Head of caudate nucleus (tissue), 42 donors: ENCODE measurements at regions of chrX and their contacts with region 1.

Region 1: DNA sequence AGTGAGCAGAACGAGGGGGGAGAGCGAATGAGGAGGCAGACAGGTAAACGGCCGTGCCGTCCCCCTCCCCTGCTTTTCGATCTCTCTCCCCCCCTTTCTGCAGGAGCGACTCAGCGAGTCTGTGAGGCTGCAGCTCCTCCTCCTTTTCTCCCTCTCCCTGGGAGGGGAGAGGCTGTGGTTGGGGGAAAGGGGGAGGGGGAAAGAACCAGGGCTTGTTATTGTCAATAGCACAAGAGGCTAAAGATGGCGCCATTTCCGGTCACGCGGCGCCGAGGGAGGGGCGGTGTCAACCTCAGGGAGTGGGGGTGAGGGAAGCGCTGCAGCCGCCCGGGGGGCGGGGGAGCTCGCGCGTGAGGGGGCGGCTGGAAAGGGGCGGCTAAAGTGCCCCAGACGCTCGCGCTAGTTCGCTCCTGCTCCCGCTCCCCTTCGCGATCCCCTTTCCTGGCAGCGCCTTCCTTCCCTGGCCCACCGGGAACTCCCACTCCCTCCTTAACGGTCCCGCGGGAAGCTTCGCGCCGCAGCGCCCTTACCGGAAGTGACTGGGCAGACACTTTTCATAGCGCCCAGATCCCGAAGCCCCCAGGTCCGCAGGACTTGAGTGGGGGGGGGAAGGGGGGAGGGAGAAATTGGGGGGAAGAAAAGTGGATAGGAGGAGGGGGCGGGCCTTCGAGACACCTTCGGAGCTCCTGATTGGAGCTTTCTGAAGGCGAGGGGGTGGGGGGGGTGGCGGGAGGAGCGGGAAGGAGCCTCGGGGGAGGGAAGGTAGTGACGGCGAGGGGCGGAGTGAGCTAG is at the start of gene CUL4B:
- DNase-seq: peak; percentile 83 to 97 (median 93)

Region 2: GRCh38 chrX:119228512-119229252 is 1332.4 kb before region 1 on chrX:
- intact Hi-C with region 1: no loop called
- DNase-seq: no peak

Region 3: DNA sequence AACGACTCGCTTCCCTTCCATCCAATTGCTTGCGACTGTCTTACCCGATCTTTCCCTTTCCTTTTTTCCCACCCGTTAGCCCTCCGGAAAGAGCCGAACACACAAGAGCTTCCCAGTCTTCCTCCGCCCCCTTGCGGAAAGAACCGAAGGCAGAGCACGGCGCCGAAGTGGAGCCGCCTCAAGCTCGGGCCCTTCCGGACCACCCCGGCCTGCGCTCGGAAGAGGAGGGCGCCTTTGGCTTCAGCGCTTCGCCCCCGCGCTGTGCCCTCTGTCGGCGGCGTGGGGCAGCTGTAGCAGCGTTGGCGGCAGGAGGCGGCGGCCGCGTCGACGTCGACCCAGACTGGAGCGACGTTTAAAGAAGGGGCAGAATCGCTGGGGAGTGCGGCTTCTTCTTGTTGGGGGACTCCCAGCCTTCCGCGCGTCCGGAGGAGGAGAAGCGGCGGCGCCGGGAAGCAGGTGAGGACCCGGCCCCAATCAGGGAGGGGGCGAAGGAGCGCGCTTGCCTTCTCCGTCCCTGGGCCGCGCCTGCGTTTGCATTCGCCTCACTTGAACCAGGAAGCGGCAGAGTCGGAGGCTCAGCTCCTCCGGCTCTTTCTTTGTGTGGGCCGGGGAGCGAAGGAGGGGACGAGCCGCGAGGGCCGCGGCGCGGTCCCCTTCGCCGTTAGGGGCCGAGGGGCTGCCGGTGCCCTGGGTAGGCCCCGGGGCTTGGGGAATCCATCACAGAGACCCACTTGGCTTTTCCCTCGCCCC is 310.3 kb before region 1 on chrX and contains the start of gene ZBTB33:
- intact Hi-C with region 1: no loop called
- DNase-seq: peak; percentile 62 to 94 (median 87)

Region 4: DNA sequence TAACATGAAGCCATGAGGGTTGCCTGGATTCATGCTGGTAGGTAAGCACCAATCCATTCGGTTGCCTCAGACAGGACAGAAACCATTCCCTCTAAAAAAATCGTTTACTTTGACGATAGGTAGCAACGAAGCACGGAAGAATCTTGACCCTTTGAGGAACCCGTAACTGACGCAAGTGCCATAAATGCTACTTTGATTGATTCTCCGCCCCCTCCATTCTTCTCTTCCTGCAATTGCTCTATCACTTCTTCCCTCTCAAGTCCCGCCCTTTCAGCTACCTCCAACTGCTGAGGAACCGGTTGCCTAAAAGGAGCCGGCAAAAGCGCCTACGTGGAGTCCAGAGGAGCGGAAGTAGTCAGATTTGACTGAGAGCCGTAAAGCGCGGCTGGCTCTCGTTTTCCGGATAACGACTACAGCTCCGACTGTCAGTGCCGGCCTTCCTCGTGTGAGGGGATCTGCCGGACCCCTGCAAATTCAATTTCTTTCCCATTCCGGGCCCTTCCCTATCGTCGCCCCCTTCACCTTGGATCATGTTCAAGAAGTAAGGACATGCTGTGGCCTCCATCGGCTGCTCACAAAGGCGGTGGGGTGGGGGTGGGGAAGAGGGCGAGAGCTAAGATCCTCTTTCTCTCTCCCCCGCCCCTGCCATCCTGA is 42.8 kb after region 1 on chrX and contains the start of gene MCTS1:
- intact Hi-C with region 1: loop called (anchors 2 kb)
- DNase-seq: peak; percentile 59 to 91 (median 78)

Region 5: DNA sequence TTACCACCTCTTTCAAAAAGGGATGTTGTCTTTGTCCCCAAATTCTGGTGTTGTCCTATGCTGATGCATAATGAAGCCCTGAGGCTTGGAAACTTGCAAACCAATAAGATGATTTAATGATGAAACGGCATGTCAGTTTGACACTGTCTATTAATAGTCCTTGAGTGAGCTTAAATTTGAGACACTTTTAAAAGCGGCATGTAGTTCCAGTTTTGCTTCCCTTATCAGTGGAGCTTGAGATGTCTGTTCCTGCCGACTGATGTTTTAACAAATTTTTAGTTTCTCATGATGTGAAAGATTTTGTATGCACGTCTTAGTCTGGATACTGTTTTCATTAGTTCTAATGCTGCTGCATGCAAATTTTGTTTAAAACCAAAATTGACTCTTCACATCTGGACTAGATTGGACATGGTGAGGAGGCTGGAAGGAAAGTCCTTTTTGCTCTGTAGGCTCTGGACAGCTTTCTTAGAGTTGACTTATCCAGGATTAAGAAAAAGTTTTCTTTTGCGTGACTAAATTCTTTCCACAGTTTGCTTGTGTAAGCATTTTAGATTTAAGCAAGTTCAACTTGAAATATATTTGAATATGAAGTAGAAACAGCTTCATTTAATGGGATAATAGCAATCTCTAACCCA is 57.1 kb after region 1 on chrX:
- intact Hi-C with region 1: no loop called
- DNase-seq: no peak

Region 6: GRCh38 chrX:120725874-120726273 is 164.8 kb after region 1 on chrX:
- intact Hi-C with region 1: no loop called
- DNase-seq: no peak